Transverse colon (tissue), 4 donors: ENCODE measurements at regions of chr14 and their contacts with region 1.

Region 1: GRCh38 chr14:59067127-59067894 is 121.2 kb upstream of the DAAM1 start:
- DNase-seq: peak; percentile 19
- H3K4me3 ChIP-seq: no peak overlapping the region
- H3K27ac ChIP-seq: peak overlapping the region in 3 of 4 donors; percentile 44 to 67 (median 62)
- H3K4me1 ChIP-seq: peaks cover 0 to 9% (median 0%) of the 10 kb centered on the region in 4 donors
- H3K27me3 ChIP-seq: no peaks in the 10 kb centered on the region
- CTCF ChIP-seq: no peak
- EP300 ChIP-seq: no peak
- POLR2A ChIP-seq: no peak

Region 2: GRCh38 chr14:59093902-59094301 is 26.6 kb after region 1 on chr14:
- in situ Hi-C with region 1: no loop called
- intact Hi-C with region 1: loop called (anchors 2 kb)
- DNase-seq: no peak
- H3K4me3 ChIP-seq: no peak overlapping the region
- H3K27ac ChIP-seq: no peak overlapping the region
- H3K4me1 ChIP-seq: no peaks in the 10 kb centered on the region
- H3K27me3 ChIP-seq: no peaks in the 10 kb centered on the region
- CTCF ChIP-seq: no peak
- EP300 ChIP-seq: no peak
- POLR2A ChIP-seq: no peak

Region 3: GRCh38 chr14:59228421-59228820 is 161.1 kb after region 1 on chr14:
- in situ Hi-C with region 1: no loop called
- intact Hi-C with region 1: no loop called
- DNase-seq: no peak
- H3K4me3 ChIP-seq: no peak overlapping the region
- H3K27ac ChIP-seq: peak overlapping the region in 1 of 4 donors; percentile 18
- H3K4me1 ChIP-seq: peaks cover 0 to 5% (median 3%) of the 10 kb centered on the region in 4 donors
- H3K27me3 ChIP-seq: no peaks in the 10 kb centered on the region
- CTCF ChIP-seq: no peak
- EP300 ChIP-seq: no peak
- POLR2A ChIP-seq: no peak

Region 4: GRCh38 chr14:59374048-59374447 is 306.7 kb after region 1 on chr14:
- in situ Hi-C with region 1: no loop called
- intact Hi-C with region 1: no loop called
- DNase-seq: no peak
- H3K4me3 ChIP-seq: no peak overlapping the region
- H3K27ac ChIP-seq: no peak overlapping the region
- H3K4me1 ChIP-seq: peaks cover 0 to 26% (median 11%) of the 10 kb centered on the region in 4 donors
- H3K27me3 ChIP-seq: no peaks in the 10 kb centered on the region
- CTCF ChIP-seq: no peak
- EP300 ChIP-seq: no peak
- POLR2A ChIP-seq: no peak